ENCODE measurements at regions of chr11 and their contacts with region 1.

Region 1: DNA sequence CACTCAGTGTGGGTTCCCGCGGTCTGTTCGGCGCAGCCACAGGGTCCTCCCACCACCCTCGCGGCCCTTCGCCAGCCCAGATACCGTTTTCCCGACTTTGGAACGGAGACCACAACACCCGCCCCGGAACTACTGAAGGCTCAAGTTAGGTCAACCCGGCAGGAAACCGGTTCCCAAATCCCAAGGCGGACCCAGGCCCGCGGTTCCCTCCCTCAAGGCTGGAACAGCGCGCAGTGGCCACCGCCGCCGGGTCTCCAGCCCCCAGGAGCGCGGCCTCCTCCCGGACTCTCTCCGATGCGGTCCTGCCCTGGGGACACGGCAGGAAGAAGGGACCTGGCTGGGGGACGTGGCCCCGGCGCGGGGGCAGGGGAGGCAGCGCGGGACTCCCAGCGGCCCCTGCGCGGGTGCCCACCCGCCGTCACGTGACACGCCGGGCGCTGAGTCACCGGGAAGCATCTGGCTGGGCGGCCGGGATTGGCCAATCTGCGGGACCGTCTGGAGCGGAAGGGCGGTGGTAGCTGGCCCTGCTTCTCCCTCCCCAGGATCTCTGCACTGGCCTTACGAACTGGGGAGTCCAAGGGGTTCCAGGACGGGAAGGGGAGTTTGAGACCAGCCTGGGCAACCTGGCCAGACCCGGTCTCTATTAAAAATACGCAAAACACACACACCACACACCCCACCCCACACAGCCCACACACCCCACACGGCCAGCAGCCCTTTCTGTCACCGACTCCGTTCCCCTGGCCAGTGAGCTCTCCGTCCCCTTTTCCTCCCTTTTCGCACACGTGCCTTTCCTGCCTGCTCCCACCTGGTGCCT is 21.5 kb upstream of the MALAT1 start:
- DNase-seq: peak; percentile 92
- H3K4me3 Mint-ChIP-seq: peak overlapping the region; percentile 99
- H3K27ac Mint-ChIP-seq: peak overlapping the region; percentile 98
- H3K4me1 Mint-ChIP-seq: peaks cover 24% of the 10 kb centered on the region
- H3K27me3 Mint-ChIP-seq: peaks cover 4% of the 10 kb centered on the region

Region 2: DNA sequence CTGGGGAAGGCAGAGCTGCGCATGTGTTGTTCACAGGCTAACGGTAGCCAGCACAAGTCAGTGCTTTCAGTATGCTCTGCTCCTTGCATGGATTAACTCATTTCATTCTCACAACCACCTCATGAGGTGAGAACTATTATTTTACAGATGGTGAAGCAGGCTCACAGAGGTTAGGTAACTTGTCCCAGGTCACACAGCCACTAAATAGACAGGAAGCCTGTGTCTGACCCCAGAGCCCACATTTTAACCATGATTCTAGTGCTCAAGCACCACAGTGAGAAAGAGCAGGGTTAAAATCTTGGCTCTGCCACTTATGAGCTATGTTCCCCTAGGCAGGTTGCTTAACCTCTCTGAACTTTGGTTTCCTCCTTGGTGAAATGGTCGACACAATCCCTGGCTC is 456.4 kb before region 1 on chr11:
- CTCF ChIA-PET with region 1: no interaction called
- POLR2A ChIA-PET with region 1: no interaction called
- DNase-seq: no peak
- H3K4me3 Mint-ChIP-seq: no peak overlapping the region
- H3K27ac Mint-ChIP-seq: no peak overlapping the region
- H3K4me1 Mint-ChIP-seq: peaks cover 13% of the 10 kb centered on the region
- H3K27me3 Mint-ChIP-seq: no peaks in the 10 kb centered on the region

Region 3: DNA sequence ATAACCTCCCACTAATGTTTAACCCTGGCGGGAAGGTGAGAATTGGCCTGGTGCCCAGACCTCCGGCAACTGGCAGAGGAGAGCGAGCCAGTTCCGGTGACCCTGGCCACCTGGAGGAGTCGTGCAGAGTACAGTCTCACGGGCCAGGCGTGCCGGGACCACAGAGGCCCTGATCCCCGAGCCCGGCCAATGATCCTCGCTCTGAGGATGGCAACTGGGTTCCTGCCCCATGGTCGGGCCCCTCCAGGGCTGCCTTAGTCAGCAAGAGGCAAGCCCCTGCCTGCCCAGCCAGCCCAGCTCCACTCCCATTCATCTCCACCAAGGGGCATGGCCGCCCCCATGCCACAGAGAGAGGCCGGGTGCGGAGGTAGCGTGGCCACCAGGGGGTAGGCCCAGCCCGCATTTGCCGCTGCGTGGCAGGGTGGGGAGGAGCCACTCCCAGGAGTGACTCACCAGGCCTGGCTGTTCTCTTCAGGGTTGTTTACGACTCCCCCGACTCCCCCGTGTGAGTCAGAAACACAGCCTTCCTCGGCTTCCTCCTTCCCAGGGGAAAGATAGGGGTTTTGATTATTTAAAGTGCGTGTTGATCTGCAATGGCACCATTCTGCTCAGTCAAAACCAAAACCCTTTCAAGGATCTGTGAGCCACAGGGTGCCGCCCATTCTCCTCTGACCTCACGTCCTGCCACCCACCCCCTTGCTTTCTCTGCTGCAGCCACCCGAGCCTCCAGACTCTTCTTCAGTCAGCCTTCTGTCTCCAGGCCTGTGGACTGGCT is 95.1 kb before region 1 on chr11 and contains the start of gene SLC25A45:
- CTCF ChIA-PET with region 1: interaction called, 5 read pairs
- POLR2A ChIA-PET with region 1: interaction called, 12 read pairs
- DNase-seq: peak; percentile 93
- H3K4me3 Mint-ChIP-seq: peak within 1 kb of the TSS; percentile 81
- H3K27ac Mint-ChIP-seq: peak within 1 kb of the TSS; percentile 99
- H3K4me1 Mint-ChIP-seq: peaks cover 59% of the 10 kb centered on the region
- H3K27me3 Mint-ChIP-seq: no peaks in the 10 kb centered on the region
- total RNA-seq, gene SLC25A45: 19.4 to 19.8 TPM

Region 4: GRCh38 chr11:65398362-65398910 is 78.9 kb before region 1 on chr11:
- CTCF ChIA-PET with region 1: no interaction called
- POLR2A ChIA-PET with region 1: no interaction called
- DNase-seq: no peak
- H3K4me3 Mint-ChIP-seq: no peak overlapping the region
- H3K27ac Mint-ChIP-seq: no peak overlapping the region
- H3K4me1 Mint-ChIP-seq: peaks cover 3% of the 10 kb centered on the region
- H3K27me3 Mint-ChIP-seq: no peaks in the 10 kb centered on the region

Region 5: GRCh38 chr11:65440831-65441499 is 36.4 kb before region 1 on chr11:
- CTCF ChIA-PET with region 1: interaction called, 3 read pairs
- POLR2A ChIA-PET with region 1: interaction called, 73 read pairs
- DNase-seq: no peak
- H3K4me3 Mint-ChIP-seq: no peak overlapping the region
- H3K27ac Mint-ChIP-seq: peak overlapping the region; percentile 82
- H3K4me1 Mint-ChIP-seq: peaks cover 73% of the 10 kb centered on the region
- H3K27me3 Mint-ChIP-seq: no peaks in the 10 kb centered on the region

Region 6: GRCh38 chr11:65459552-65459951 is 17.8 kb before region 1 on chr11:
- CTCF ChIA-PET with region 1: interaction called, 4 read pairs
- POLR2A ChIA-PET with region 1: interaction called, 15 read pairs
- DNase-seq: no peak
- H3K4me3 Mint-ChIP-seq: no peak overlapping the region
- H3K27ac Mint-ChIP-seq: no peak overlapping the region
- H3K4me1 Mint-ChIP-seq: peaks cover 28% of the 10 kb centered on the region
- H3K27me3 Mint-ChIP-seq: peaks cover 1% of the 10 kb centered on the region

Region 7: GRCh38 chr11:65609229-65609628 is 131.9 kb after region 1 on chr11:
- CTCF ChIA-PET with region 1: no interaction called
- POLR2A ChIA-PET with region 1: no interaction called
- DNase-seq: no peak
- H3K4me3 Mint-ChIP-seq: no peak overlapping the region
- H3K27ac Mint-ChIP-seq: peak overlapping the region; percentile 62
- H3K4me1 Mint-ChIP-seq: peaks cover 50% of the 10 kb centered on the region
- H3K27me3 Mint-ChIP-seq: no peaks in the 10 kb centered on the region

Measured in activated CD4-positive, alpha-beta memory T cell treated with anti-CD3 and anti-CD28 coated beads, Interleukin-2, amount 10 ng/mL, durations not matched to agents 7 days and 5 days (primary cell).